Head of caudate nucleus (tissue), 42 donors: ENCODE measurements at regions of chr19 and their contacts with region 1.

Region 1: DNA sequence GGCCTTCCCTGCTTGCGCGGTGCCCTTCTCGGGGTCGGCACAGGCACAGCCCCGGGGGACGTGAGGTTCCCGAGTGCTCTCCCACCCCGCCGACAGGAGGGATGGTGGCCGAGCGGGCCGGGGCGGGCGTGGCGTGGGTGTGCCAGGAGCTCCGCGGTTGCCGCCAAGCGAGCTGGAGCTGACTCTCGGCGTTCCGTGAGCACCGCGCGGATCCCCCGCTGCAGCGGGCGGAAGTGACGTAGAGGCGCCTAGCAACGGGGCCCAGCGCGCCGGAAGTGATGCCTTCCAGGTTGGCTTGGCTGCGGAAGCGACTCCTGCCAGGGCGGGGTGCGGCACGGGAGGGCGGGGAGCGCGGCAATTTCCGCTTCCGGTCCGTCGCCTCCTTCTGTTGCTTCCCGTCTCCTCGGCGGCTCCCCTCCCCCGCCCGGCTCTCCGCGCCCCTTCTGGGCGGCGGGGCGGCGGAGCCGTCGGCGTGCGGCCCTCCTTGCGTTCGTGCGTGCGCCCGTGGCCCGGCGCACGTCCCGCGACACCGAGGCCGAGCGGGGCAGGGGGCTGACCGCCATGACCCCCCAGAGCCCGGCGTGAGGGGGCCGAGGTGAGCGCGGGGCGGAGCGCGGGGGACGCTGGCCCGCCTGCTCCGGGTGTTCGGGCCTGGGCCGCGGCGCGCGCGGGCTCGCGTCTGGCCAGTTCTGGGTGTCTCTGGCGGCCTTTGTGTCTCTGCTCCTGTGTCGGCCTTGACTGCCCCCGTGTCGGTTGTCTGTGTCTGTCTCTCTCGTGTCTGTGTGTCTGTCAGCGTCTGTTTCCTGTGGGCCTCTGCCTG is at the start of gene EPN1:
- DNase-seq: peak; percentile 91 to 99 (median 97)

Region 2: GRCh38 chr19:55653758-55654539 is 21.1 kb before region 1 on chr19:
- intact Hi-C with region 1: loop called (anchors 2 kb)
- DNase-seq: peak; percentile 94 to 99 (median 98)

Region 3: GRCh38 chr19:55820037-55820436 is 145.0 kb after region 1 on chr19:
- intact Hi-C with region 1: no loop called
- DNase-seq: peak in 1 of 42 donors; percentile 1